Gastrocnemius medialis (tissue), 4 donors: ENCODE measurements at regions of chr2 and their contacts with region 1.

Region 1: DNA sequence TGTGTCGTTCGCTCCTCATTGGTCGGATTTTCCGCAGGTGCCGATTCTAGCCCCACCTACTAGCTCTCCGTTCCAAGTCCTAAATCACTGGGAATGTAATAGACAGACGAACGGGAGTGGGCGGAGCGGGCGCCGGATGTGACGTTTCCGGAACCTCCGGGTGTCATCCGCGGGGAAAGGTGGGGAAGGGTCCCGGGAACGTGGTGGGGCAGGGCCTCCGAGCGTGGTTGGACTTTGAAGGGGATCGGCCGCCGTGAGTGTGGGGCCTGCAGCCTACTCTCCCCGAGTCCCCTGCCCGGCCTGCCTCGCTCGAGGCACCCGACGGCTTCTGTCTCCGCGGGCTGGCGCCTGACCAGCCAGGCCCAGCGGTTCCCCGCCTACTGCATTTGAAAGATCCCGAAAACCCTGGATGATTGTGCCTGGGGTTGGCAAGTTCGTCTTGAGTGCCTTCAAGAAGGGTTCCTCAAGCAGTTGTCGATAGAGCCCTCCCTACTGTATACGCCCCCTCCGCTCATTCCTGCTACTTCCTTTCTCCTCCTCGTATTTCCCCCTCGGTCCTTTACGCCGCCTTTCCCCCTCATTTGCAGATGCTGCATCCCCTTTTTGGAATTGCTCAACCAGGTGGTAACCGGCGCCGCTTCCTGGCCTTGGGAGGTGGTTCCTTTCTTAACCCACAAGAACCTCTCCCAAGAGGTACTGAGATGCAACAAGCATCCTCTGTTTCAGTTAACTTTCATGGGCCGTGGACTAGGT is at the start of gene STAMBP:
- DNase-seq: peak; percentile 96
- ATAC-seq: peak; percentile 91 to 96
- H3K4me3 ChIP-seq: peak within 1 kb of the TSS; percentile 79 to 94 (median 86)
- H3K27ac ChIP-seq: peak within 1 kb of the TSS; percentile 92 to 97 (median 96)
- H3K4me1 ChIP-seq: peaks cover 47 to 51% of the 10 kb centered on the region in 2 donors
- H3K27me3 ChIP-seq: no peaks in the 10 kb centered on the region
- CTCF ChIP-seq: no peak
- POLR2A ChIP-seq: peak; percentile 78 to 85
- total RNA-seq, gene STAMBP: 38.0 to 85.4 (median 67.1) TPM

Region 2: GRCh38 chr2:73926493-73927338 is 97.7 kb after region 1 on chr2 and contains the start of gene DGUOK:
- in situ Hi-C with region 1: loop called in 1 of 4 experiments (anchors 10 kb)
- intact Hi-C with region 1: loop called (anchors 1 kb)
- DNase-seq: peak; percentile 96 to 97
- ATAC-seq: peak; percentile 100
- H3K4me3 ChIP-seq: peak within 1 kb of the TSS; percentile 69 to 91 (median 82)
- H3K27ac ChIP-seq: peak within 1 kb of the TSS; percentile 82 to 93 (median 91)
- H3K4me1 ChIP-seq: peaks cover 15 to 17% of the 10 kb centered on the region in 2 donors
- H3K27me3 ChIP-seq: peaks cover 0 to under 1% (median 0%) of the 10 kb centered on the region in 3 donors
- CTCF ChIP-seq: no peak
- POLR2A ChIP-seq: peak; percentile 82 to 90
- total RNA-seq, gene DGUOK: 10.2 to 25.2 (median 20.3) TPM

Region 3: DNA sequence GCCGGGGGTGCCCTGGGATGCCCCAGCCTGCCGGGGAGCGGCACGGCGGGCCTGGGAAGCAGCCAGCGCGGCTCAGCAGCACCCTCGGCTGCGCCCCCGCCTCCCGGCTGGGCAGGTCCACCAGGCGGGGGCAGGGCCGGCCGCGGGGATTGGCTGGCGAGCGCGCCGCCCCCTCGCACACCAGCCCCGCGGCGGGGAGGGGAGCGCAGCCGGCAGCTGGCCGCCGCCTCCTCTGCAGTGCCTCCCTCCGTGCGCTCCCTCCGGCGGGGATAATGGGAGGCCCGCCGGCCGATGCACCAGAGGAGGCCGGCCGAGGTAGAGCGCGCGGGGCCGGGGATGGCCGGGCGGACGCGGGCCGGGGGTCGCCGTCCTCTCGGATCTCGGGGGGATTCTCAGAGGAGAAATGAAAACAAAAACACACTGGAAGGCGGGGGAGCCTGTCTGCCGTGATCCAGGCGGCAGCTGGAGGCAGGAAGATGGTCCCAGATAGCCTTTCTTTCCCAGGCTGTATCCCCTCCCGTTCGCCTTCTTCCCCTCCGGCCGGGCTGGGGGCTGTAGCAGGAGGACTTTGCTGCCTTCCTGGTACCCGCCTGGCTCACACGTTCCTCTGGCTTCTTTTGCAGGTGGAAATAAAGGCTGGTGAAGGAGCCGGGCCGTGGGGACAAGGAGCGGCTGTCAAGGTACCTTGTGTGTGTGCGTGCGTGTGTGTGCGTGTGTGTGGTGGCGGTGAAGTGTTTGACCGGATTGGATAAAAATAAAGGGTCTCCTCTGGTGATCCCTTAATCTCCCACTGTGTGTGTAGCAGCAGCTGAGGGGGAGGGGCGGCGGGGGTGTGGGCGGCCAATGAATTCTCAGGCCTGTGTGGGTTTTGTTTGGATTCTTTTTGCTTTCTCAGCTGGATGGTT is 173.7 kb after region 1 on chr2:
- in situ Hi-C with region 1: no loop called
- intact Hi-C with region 1: loop called (anchors 5 kb)
- DNase-seq: peak; percentile 52 to 64
- ATAC-seq: peak; percentile 82 to 90
- H3K4me3 ChIP-seq: peak overlapping the region; percentile 57 to 87 (median 63)
- H3K27ac ChIP-seq: peak overlapping the region in 3 of 4 donors; percentile 61 to 68 (median 66)
- H3K4me1 ChIP-seq: peaks cover 26 to 27% of the 10 kb centered on the region in 2 donors
- H3K27me3 ChIP-seq: no peaks in the 10 kb centered on the region
- CTCF ChIP-seq: peak in 1 of 5 experiments; percentile 17
- POLR2A ChIP-seq: peak; percentile 71 to 72

Region 4: DNA sequence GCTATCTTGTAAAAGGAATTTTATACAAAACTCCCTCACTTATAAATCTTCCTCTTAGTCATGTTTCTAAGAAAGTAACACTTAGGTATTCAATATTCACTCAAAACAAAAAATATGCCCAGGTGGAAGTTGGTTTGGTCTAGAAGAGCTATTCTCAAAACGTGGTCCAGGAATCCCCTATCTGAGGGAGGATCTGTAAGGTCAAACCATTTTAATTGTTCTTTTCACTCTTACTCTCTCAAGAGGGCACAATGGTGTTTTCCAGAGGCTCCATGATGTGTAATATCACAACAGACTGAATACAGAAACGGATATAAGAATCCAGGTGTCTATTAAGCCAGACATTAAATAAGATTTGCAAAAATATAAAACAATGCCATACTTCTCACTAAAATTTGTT is 339.7 kb after region 1 on chr2:
- in situ Hi-C with region 1: loop called in 1 of 4 experiments (anchors 25 kb)
- intact Hi-C with region 1: loop called (anchors 10 kb)
- DNase-seq: no peak
- ATAC-seq: no peak
- H3K4me3 ChIP-seq: no peak overlapping the region
- H3K27ac ChIP-seq: no peak overlapping the region
- H3K4me1 ChIP-seq: peaks cover 0 to 5% of the 10 kb centered on the region in 2 donors
- H3K27me3 ChIP-seq: no peaks in the 10 kb centered on the region
- CTCF ChIP-seq: no peak
- POLR2A ChIP-seq: no peak

Region 5: DNA sequence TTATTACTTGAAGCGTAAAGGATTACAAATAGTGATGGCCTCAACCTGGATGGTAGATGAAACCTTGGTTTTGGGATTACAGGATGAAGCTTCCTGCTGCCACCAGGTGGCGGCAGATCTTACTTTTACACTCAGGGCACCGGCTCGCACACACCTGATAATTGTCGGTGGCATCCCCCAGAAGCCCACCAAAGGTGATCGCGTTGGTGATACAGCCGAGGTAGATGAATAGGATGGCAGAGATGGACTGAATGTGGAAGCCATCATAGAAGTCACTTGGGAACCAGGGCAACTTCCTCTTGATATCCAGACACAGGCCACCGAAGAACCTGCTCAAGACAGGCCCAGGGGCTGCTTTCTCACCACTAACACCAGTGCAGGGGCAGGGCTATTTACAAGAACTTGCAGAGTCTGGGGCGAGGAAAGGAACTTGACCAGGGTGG is 421.2 kb after region 1 on chr2:
- in situ Hi-C with region 1: no loop called
- intact Hi-C with region 1: loop called (anchors 10 kb)
- DNase-seq: no peak
- ATAC-seq: peak in 1 of 2 donors; percentile 49
- H3K4me3 ChIP-seq: no peak overlapping the region
- H3K27ac ChIP-seq: no peak overlapping the region
- H3K4me1 ChIP-seq: no peaks in the 10 kb centered on the region
- H3K27me3 ChIP-seq: no peaks in the 10 kb centered on the region
- CTCF ChIP-seq: peak; percentile 31 to 68 (median 56)
- POLR2A ChIP-seq: no peak

Region 6: GRCh38 chr2:74391580-74392448 is 562.8 kb after region 1 on chr2:
- in situ Hi-C with region 1: no loop called
- intact Hi-C with region 1: loop called (anchors 10 kb)
- DNase-seq: peak; percentile 85 to 86
- ATAC-seq: peak; percentile 95 to 96
- H3K4me3 ChIP-seq: peak overlapping the region; percentile 79 to 83 (median 82)
- H3K27ac ChIP-seq: peak overlapping the region; percentile 84 to 94 (median 89)
- H3K4me1 ChIP-seq: peaks cover 40 to 41% of the 10 kb centered on the region in 2 donors
- H3K27me3 ChIP-seq: no peaks in the 10 kb centered on the region
- CTCF ChIP-seq: peak; percentile 83 to 98 (median 93)
- POLR2A ChIP-seq: peak in 1 of 2 donors; percentile 23